Posterior cingulate gyrus (tissue), 11 donors: ENCODE measurements at regions of chrX and their contacts with region 1.

Region 1: DNA sequence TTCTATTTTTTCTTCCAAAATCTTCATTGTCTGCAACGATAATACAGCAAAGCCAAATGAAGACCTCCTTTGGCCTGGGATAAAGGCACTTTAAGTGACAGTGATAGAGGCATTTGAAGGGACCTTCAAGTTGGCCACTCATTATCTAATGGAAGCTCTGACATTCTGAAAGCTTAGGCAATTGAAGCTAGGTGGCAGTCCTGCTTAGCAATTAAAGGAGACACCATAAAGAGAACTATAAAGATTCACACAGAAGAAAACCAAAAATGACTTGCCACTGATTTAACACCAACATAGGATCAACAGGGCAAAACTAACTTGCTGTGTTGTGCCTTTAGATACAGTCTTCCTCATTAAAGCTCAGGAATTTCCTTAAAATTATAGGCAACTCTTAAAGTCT is 103.3 kb upstream of the TSPAN7 start:
- DNase-seq: no peak

Region 2: GRCh38 chrX:38654302-38654701 is 196.2 kb after region 1 on chrX:
- intact Hi-C with region 1: loop called (anchors 2 kb)
- DNase-seq: no peak

Region 3: GRCh38 chrX:38868941-38869401 is 410.9 kb after region 1 on chrX:
- intact Hi-C with region 1: no loop called
- DNase-seq: no peak